SK-N-SH (cell line): ENCODE measurements at regions of chr11 and their contacts with region 1.

Region 1: GRCh38 chr11:119891055-119891768 is 162.2 kb upstream of the NECTIN1 start:
- DNase-seq: peak; percentile 74
- H3K4me3 ChIP-seq: no peak overlapping the region
- H3K27ac ChIP-seq: peak overlapping the region in 1 of 2 experiments; percentile 100; a peak in 2 of 4 replicates
- H3K4me1 ChIP-seq: peaks cover 0 to 80% of the 10 kb centered on the region in 2 experiments; a peak in 2 of 4 replicates
- H3K27me3 ChIP-seq: peaks cover 17% of the 10 kb centered on the region
- CTCF ChIP-seq: no peak
- EP300 ChIP-seq: peak in 1 of 2 experiments; percentile 96; a peak in 2 of 4 replicates
- RAD21 ChIP-seq: peak; percentile 38; the same call in 1 of the 2 replicates

Region 2: GRCh38 chr11:119774172-119774763 is 116.9 kb before region 1 on chr11:
- CTCF ChIA-PET with region 1: interaction called, 21 read pairs
- POLR2A ChIA-PET with region 1: interaction called, 87 read pairs
- DNase-seq: no peak
- H3K4me3 ChIP-seq: no peak overlapping the region
- H3K27ac ChIP-seq: peak overlapping the region in 1 of 2 experiments; percentile 89; a peak in 1 of 4 replicates
- H3K4me1 ChIP-seq: peaks cover 0 to 78% of the 10 kb centered on the region in 2 experiments; a peak in 2 of 4 replicates
- H3K27me3 ChIP-seq: no peaks in the 10 kb centered on the region
- CTCF ChIP-seq: no peak
- EP300 ChIP-seq: no peak
- RAD21 ChIP-seq: no peak

Region 3: DNA sequence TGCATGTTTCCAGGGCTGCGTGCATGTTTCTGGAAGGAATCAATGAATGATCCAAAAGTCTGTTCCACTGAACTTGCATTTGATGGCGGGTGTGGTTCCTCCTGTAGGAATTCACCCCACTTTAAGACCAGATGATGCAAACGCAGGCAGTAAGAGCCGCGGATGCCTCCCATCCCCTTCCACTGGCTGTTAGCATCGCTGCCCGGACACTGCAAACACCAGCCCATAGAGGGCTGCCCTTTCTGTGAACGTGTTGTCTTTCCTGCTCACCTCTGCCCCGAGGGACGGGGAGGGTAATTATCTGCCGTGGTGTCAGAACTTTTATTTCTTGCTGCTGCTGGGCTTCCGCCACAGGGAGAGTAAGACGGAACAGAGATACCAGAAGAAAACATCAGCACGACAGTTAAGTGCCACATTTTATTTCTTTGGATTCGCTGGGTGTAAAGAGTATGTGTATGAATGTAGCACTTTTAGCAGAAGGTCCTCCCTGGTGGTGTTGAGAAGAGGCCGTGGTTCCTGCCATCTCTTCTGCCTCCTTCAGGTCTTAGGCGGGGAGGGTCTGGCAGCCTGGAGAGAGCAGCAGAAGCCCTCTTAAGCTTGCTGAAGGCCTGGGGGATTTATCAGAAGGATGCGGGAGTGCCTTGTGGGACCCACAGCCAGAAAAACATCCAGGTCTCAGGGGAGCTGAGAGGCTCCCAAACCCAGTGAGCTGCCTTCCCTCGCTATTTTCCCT is 109.0 kb before region 1 on chr11:
- CTCF ChIA-PET with region 1: interaction called, 21 read pairs
- POLR2A ChIA-PET with region 1: interaction called, 87 read pairs
- DNase-seq: no peak
- H3K4me3 ChIP-seq: no peak overlapping the region
- H3K27ac ChIP-seq: peak overlapping the region in 1 of 2 experiments; percentile 77; a peak in 2 of 4 replicates
- H3K4me1 ChIP-seq: peaks cover 0 to 64% of the 10 kb centered on the region in 2 experiments; a peak in 2 of 4 replicates
- H3K27me3 ChIP-seq: no peaks in the 10 kb centered on the region; the same call in none of the 2 replicates
- CTCF ChIP-seq: no peak
- EP300 ChIP-seq: no peak
- RAD21 ChIP-seq: no peak

Region 4: DNA sequence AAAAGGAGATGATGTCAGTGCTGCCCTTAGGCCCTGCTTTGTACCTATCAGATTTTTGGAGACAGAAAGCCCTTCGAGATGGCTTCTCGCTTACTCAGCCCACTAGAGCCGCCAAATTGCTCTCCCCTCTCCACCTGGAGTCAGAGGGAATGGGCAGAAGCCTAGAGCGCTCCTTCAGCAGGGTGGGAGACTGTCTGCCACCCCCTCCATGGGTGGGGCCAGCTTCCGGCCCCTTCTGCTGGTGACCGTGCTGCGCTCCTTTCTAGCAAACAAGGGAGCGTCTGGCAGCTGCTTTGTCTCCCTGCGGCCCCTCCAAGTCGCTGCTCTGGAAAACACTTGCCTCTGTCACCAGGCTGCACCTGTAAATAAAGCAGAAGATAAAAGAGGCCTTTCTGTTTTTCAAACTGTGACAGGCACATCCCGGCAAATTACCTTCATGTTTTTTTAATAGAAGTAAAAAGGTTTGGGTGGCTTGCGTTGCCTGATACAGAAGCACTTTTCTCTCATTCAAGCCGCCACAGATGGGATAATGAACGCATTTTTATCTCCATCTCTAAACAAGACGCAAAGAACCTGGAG is 16.5 kb before region 1 on chr11:
- CTCF ChIA-PET with region 1: interaction called, 8 read pairs
- POLR2A ChIA-PET with region 1: interaction called, 23 read pairs
- DNase-seq: peak; percentile 64
- H3K4me3 ChIP-seq: no peak overlapping the region
- H3K27ac ChIP-seq: peak overlapping the region in 1 of 2 experiments; percentile 97; a peak in 2 of 4 replicates
- H3K4me1 ChIP-seq: peaks cover 0 to 70% of the 10 kb centered on the region in 2 experiments; a peak in 2 of 4 replicates
- H3K27me3 ChIP-seq: peaks cover 12% of the 10 kb centered on the region; the same call in 1 of the 2 replicates
- CTCF ChIP-seq: no peak
- EP300 ChIP-seq: peak in 1 of 2 experiments; percentile 69; a peak in 1 of 4 replicates
- RAD21 ChIP-seq: peak; percentile 2; the same call in 1 of the 2 replicates

Region 5: DNA sequence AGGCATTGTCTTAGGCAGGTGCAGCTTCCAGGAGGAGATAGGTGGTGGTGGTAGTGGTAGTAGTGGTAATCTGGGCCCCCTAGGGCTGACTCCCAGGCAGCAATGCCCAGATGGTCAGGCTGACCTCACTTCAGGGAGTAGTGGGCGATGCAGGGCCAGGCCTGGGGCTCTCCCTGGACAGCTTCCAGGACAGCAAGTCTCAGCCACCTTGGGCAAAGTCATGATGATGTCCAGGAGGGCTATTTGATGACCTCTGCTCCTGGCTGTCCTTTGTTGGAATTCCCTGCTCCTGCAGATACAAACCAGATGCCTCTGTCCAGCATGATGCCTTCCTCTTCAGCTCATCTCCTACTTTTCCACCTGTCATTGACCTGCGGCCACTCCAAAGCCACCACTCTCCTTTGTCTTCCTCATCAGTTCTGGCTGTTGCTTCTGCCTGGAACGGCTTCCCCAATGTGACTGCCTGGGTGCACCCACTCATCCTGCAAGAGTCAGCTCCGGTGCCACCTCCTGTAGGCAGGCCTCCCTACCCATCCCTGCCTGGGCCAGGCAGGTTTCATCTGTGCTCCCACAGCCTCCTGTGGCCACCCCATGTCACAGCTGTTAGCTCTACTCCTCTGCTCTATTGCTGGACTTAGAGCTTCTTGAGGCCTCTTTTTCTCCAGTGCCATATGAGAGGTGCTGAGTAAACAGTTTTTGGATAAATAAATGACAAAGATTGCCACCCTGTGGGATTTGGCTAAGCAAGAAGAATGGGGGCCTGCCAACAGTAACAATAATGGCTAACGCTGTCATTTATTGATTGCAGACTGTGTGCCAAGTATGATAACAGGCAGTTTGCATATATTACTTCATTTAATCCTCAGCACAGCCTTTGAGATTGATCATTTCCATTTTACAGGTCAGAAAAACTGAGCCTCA is 10.7 kb after region 1 on chr11:
- CTCF ChIA-PET with region 1: interaction called, 33 read pairs
- POLR2A ChIA-PET with region 1: interaction called, 75 read pairs
- DNase-seq: peak; percentile 34
- H3K4me3 ChIP-seq: no peak overlapping the region
- H3K27ac ChIP-seq: peak overlapping the region in 1 of 2 experiments; percentile 45; a peak in 1 of 4 replicates
- H3K4me1 ChIP-seq: peaks cover 0 to 54% of the 10 kb centered on the region in 2 experiments; a peak in 2 of 4 replicates
- H3K27me3 ChIP-seq: peaks cover 15% of the 10 kb centered on the region; the same call in 1 of the 2 replicates
- CTCF ChIP-seq: no peak
- EP300 ChIP-seq: peak in 1 of 2 experiments; percentile 54; a peak in 1 of 4 replicates
- RAD21 ChIP-seq: no peak

Region 6: GRCh38 chr11:119928047-119928446 is 36.8 kb after region 1 on chr11:
- CTCF ChIA-PET with region 1: no interaction called
- POLR2A ChIA-PET with region 1: no interaction called
- DNase-seq: no peak
- H3K4me3 ChIP-seq: no peak overlapping the region
- H3K27ac ChIP-seq: no peak overlapping the region
- H3K4me1 ChIP-seq: peaks cover 0 to 3% of the 10 kb centered on the region in 2 experiments; a peak in 1 of 4 replicates
- H3K27me3 ChIP-seq: no peaks in the 10 kb centered on the region
- CTCF ChIP-seq: no peak
- EP300 ChIP-seq: no peak
- RAD21 ChIP-seq: no peak